CD4-positive, alpha-beta T cell (primary cell): ENCODE measurements at regions of chr3 and their contacts with region 1.

Region 1: GRCh38 chr3:9932843-9933560 is 632 bp upstream of the CRELD1 start:
- DNase-seq: peak; percentile 78 to 94 (median 85)
- ATAC-seq: peak; percentile 50
- H3K4me3 ChIP-seq: peak overlapping the region; percentile 65
- H3K4me3 Mint-ChIP-seq: peak overlapping the region; percentile 99
- H3K27ac ChIP-seq: peak overlapping the region; percentile 90 to 91
- H3K27ac Mint-ChIP-seq: peak overlapping the region; percentile 99
- H3K4me1 ChIP-seq: peaks cover 45% of the 10 kb centered on the region
- H3K4me1 Mint-ChIP-seq: peaks cover 65% of the 10 kb centered on the region
- H3K27me3 ChIP-seq: no peaks in the 10 kb centered on the region
- H3K27me3 Mint-ChIP-seq: no peaks in the 10 kb centered on the region
- CTCF ChIP-seq: peak; percentile 87

Region 2: GRCh38 chr3:9809615-9810432 is 123.2 kb before region 1 on chr3 and contains the start of gene TTLL3:
- CTCF ChIA-PET with region 1: interaction called, 4 read pairs
- POLR2A ChIA-PET with region 1: interaction called, 23 read pairs
- intact Hi-C with region 1: no loop called
- DNase-seq: peak; percentile 22 to 72 (median 38)
- ATAC-seq: peak; percentile 66
- H3K4me3 ChIP-seq: peak within 1 kb of the TSS; percentile 68
- H3K4me3 Mint-ChIP-seq: peak within 1 kb of the TSS; percentile 88
- H3K27ac ChIP-seq: peak within 1 kb of the TSS; percentile 70 to 85
- H3K27ac Mint-ChIP-seq: peak within 1 kb of the TSS; percentile 83
- H3K4me1 ChIP-seq: peaks cover 35% of the 10 kb centered on the region
- H3K4me1 Mint-ChIP-seq: peaks cover 40% of the 10 kb centered on the region
- H3K27me3 ChIP-seq: no peaks in the 10 kb centered on the region
- H3K27me3 Mint-ChIP-seq: no peaks in the 10 kb centered on the region
- CTCF ChIP-seq: no peak
- total RNA-seq, gene TTLL3: 50.5 to 58.6 TPM

Region 3: GRCh38 chr3:9915254-9916141 is 17.5 kb before region 1 on chr3:
- CTCF ChIA-PET with region 1: interaction called, 12 read pairs
- POLR2A ChIA-PET with region 1: interaction called, 32 read pairs
- intact Hi-C with region 1: no loop called
- DNase-seq: peak in 9 of 14 experiments; percentile 6 to 67 (median 29)
- ATAC-seq: peak; percentile 28
- H3K4me3 ChIP-seq: peak overlapping the region; percentile 51
- H3K4me3 Mint-ChIP-seq: peak overlapping the region; percentile 81
- H3K27ac ChIP-seq: no peak overlapping the region
- H3K27ac Mint-ChIP-seq: no peak overlapping the region
- H3K4me1 ChIP-seq: peaks cover 37% of the 10 kb centered on the region
- H3K4me1 Mint-ChIP-seq: peaks cover 19% of the 10 kb centered on the region
- H3K27me3 ChIP-seq: no peaks in the 10 kb centered on the region
- H3K27me3 Mint-ChIP-seq: no peaks in the 10 kb centered on the region
- CTCF ChIP-seq: no peak

Region 4: DNA sequence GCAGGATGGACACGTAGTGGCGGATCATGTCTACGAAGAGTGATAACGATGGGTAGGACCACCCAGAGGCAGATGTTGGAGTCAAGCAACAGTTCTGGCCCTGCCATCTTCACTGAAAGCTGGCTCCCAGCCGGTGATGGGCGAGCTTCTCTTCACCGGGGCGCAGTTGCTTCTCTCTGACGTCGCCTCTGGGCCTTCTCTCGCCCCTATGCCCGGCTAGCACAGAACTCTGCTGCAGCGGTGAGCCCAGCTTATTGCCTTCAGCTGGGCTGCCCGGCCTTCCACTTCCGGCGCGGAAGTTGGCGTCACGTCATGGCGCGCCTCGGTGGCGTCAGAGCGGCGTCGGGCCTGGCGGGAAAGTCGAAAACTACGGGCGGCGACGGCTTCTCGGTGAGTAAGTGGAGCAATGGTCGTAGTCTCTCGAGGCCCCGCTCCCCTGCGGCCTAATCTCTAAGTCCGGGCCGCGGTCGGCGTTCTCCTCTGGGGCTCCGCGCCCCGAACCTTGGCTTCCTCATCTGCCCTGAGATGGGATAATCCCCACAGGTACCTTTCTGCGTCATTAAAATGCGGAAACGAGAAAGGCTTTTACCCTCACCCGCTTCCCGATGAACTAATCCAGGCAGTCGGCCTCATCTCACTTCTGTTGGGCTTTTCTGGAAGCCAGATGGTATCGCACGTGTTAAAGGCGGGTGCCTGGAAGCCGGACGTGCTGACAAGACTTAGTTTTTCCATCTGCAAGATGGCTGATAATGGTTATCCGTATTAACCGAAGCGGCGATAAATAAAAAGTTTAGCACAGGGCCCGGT is 93.3 kb after region 1 on chr3 and contains the start of gene FANCD2:
- CTCF ChIA-PET with region 1: interaction called, 8 read pairs
- POLR2A ChIA-PET with region 1: interaction called, 16 read pairs
- intact Hi-C with region 1: loop called (anchors 2 kb)
- DNase-seq: peak; percentile 82 to 97 (median 91)
- ATAC-seq: peak; percentile 91
- H3K4me3 ChIP-seq: peak within 1 kb of the TSS; percentile 87
- H3K4me3 Mint-ChIP-seq: peak within 1 kb of the TSS; percentile 98
- H3K27ac ChIP-seq: peak within 1 kb of the TSS; percentile 70 to 84
- H3K27ac Mint-ChIP-seq: peak within 1 kb of the TSS; percentile 98
- H3K4me1 ChIP-seq: peaks cover 33% of the 10 kb centered on the region
- H3K4me1 Mint-ChIP-seq: peaks cover 35% of the 10 kb centered on the region
- H3K27me3 ChIP-seq: no peaks in the 10 kb centered on the region
- H3K27me3 Mint-ChIP-seq: no peaks in the 10 kb centered on the region
- CTCF ChIP-seq: no peak
- total RNA-seq, gene FANCD2: 13.8 to 16.8 TPM

Region 5: GRCh38 chr3:10242182-10243065 is 309.4 kb after region 1 on chr3:
- CTCF ChIA-PET with region 1: no interaction called
- POLR2A ChIA-PET with region 1: interaction called, 6 read pairs
- intact Hi-C with region 1: loop called in 1 of 2 experiments (anchors 2 kb)
- DNase-seq: peak; percentile 42 to 94 (median 68)
- ATAC-seq: peak; percentile 94
- H3K4me3 ChIP-seq: peak overlapping the region; percentile 6
- H3K4me3 Mint-ChIP-seq: peak overlapping the region; percentile 77
- H3K27ac ChIP-seq: peak overlapping the region; percentile 41 to 63
- H3K27ac Mint-ChIP-seq: peak overlapping the region; percentile 91
- H3K4me1 ChIP-seq: peaks cover 59% of the 10 kb centered on the region
- H3K4me1 Mint-ChIP-seq: peaks cover 62% of the 10 kb centered on the region
- H3K27me3 ChIP-seq: no peaks in the 10 kb centered on the region
- H3K27me3 Mint-ChIP-seq: no peaks in the 10 kb centered on the region
- CTCF ChIP-seq: no peak

Region 6: GRCh38 chr3:10322352-10322710 is 389.3 kb after region 1 on chr3:
- CTCF ChIA-PET with region 1: interaction called, 6 read pairs
- POLR2A ChIA-PET with region 1: interaction called, 23 read pairs
- intact Hi-C with region 1: loop called in 1 of 2 experiments (anchors 5 kb)
- DNase-seq: peak in 3 of 14 experiments; percentile 32 to 53 (median 47)
- ATAC-seq: no peak
- H3K4me3 ChIP-seq: no peak overlapping the region
- H3K4me3 Mint-ChIP-seq: peak overlapping the region; percentile 87
- H3K27ac ChIP-seq: no peak overlapping the region
- H3K27ac Mint-ChIP-seq: peak overlapping the region; percentile 91
- H3K4me1 ChIP-seq: peaks cover 32% of the 10 kb centered on the region
- H3K4me1 Mint-ChIP-seq: peaks cover 32% of the 10 kb centered on the region
- H3K27me3 ChIP-seq: peaks cover 0 to 3% of the 10 kb centered on the region in 2 experiments
- H3K27me3 Mint-ChIP-seq: peaks cover 6% of the 10 kb centered on the region
- CTCF ChIP-seq: peak; percentile 34